ENCODE measurements at regions of chr14 and their contacts with region 1.

Region 1: DNA sequence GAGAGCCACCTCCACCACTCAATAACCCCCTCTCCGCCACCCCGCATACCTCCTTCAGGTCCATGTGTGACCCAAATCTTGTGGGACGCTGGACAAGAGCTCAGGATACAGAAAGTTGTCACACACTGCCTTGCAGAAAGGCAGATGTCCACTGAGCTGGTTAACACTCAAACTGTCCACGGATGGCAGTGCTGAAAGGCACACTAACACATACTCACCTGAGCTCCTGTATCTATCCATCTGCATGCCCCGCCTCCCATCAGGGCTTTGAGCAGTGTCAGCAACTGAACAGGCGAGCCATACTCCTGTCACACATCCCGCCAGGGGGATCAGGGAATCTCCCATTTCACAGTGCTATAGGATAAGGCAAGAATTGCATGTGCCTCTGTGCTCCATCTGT is 642.0 kb downstream of the GALC start:
- DNase-seq: no peak
- ATAC-seq: no peak
- H3K4me3 ChIP-seq: no peak overlapping the region
- H3K27ac ChIP-seq: no peak overlapping the region
- H3K4me1 ChIP-seq: no peaks in the 10 kb centered on the region
- H3K27me3 ChIP-seq: no peaks in the 10 kb centered on the region
- CTCF ChIP-seq: no peak

Region 2: DNA sequence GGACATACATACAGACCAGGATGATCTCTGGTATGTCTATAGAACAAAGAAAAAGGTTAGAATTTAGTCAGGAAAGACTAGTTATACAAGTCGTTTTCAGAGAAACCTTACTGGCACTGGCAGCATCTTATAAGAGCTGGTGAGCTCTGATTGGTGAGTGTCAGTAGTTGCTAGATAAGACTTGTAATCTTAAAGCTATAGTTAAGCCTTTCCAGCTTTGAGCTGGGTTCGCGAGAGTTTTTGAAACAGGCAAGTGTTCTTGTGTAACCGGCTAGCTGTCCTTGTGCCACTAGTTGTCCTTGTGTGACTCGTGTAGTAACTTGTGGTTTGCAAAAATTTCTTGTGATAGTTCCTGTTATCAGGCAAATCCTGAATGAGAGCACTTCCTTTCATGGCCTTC is 98.9 kb before region 1 on chr14:
- intact Hi-C with region 1: no loop called
- DNase-seq: no peak
- ATAC-seq: no peak
- H3K4me3 ChIP-seq: no peak overlapping the region
- H3K27ac ChIP-seq: no peak overlapping the region
- H3K4me1 ChIP-seq: peaks cover 0 to 5% (median 0%) of the 10 kb centered on the region in 9 donors
- H3K27me3 ChIP-seq: no peaks in the 10 kb centered on the region
- CTCF ChIP-seq: no peak

Region 3: GRCh38 chr14:87306414-87307168 is 44.4 kb before region 1 on chr14:
- intact Hi-C with region 1: loop called in 1 of 10 experiments (anchors 1 kb)
- DNase-seq: no peak
- ATAC-seq: no peak
- H3K4me3 ChIP-seq: no peak overlapping the region
- H3K27ac ChIP-seq: no peak overlapping the region
- H3K4me1 ChIP-seq: no peaks in the 10 kb centered on the region
- H3K27me3 ChIP-seq: no peaks in the 10 kb centered on the region
- CTCF ChIP-seq: no peak

Measured in heart right ventricle (tissue), 16 donors.